ENCODE measurements at regions of chr10 and their contacts with region 1.

Region 1: DNA sequence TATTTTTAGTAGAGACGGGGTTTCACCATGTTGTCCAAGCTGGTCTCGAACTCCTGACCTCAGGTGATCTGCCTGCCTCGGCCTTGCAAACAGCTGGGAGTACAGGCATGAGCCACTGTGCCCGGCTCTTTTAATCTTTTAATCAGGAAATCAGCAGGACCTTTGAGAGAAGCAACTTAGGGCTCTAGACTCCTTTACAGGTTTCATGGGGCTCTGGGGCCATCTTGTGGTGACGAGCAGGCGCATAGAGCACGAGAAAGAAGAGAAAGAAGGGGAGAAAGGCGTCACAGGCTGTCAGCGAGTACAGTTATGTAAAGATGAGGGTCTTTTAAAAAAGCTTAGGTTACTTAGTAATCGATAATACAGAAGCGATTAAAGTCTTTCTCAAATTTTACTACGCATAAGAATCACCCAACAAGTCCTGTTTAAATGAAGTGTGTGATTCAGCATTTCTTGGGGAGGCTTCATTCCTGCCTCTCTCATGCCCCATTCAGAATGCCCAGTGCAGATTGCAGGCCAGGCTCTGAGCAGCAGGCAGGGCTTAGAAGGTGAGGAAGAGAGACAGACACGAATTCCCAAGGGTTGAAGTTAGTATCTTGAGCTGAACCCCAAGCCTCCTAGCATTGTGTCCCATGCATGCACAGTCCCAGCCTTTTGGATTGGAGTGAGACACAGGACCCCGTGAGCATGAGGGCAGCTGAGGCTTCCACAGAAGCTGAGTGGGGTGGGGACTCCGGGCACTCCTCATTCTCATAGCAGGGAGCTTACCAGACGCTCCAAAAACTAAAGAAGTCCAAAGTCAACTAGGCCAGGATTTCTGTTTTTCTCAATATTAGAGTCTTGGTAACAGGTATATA is 23.6 kb upstream of the PFKP start:
- DNase-seq: peak; percentile 80
- ATAC-seq: peak; percentile 59
- H3K4me3 ChIP-seq: no peak overlapping the region
- H3K27ac ChIP-seq: peak overlapping the region; percentile 78
- H3K4me1 ChIP-seq: peaks cover 30% of the 10 kb centered on the region
- H3K27me3 ChIP-seq: no peaks in the 10 kb centered on the region
- CTCF ChIP-seq: peak; percentile 96
- POLR2A ChIP-seq: peak; percentile 36; the same call in 1 of the 2 replicates
- RAD21 ChIP-seq: peak; percentile 96

Region 2: GRCh38 chr10:1109795-1110673 is 1933.7 kb before region 1 on chr10:
- CTCF ChIA-PET with region 1: no interaction called
- POLR2A ChIA-PET with region 1: no interaction called
- dilution Hi-C with region 1: no loop called
- in situ Hi-C with region 1: loop called (anchors 10 kb)
- intact Hi-C with region 1: loop called (anchors 2 kb)
- DNase-seq: peak; percentile 87
- ATAC-seq: peak; percentile 90
- H3K4me3 ChIP-seq: no peak overlapping the region
- H3K27ac ChIP-seq: peak overlapping the region; percentile 53
- H3K4me1 ChIP-seq: peaks cover 9% of the 10 kb centered on the region
- H3K27me3 ChIP-seq: no peaks in the 10 kb centered on the region
- CTCF ChIP-seq: peak; percentile 61
- POLR2A ChIP-seq: no peak
- RAD21 ChIP-seq: peak; percentile 59

Region 3: DNA sequence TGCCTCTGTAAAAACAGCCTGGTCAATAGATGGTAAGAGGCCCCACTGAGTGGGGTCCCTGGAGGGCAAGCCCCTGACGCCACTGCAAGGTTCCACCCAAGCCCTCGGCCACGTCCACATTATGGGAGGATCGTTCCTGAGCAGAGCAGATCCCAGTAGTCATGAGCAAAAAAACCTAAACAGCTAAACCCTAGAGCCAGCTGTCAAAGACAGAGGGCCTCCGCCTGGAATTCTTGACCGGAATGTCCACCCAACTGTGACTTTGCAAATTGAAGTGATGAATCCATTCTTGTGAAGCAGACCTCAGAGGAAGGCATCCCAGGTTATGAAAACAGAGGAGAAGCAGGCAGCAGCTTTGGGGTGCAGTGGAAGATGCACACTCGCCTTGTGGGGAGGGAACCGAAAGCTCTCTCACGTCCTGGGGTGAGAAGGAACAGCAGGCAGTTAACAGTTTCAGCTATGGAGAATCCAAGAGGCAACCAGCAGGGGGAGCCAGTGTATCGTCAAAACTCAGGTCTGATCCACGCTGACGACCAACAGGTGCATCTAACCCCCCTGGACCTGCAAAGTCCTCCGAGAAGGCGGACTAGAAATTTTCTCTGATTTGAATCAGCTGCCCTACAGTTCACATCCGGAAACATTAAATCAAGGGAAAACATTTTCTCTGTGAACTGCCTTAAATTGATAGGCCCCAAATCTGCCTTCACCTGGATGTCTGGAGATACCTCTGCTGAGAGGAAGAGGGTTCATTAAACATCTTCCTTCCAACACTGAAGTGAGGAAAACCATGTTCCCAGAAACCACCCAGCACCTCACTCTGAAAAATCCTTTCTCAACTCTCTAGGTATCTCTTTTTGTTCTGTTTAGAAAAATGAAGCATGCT is 115.5 kb before region 1 on chr10:
- CTCF ChIA-PET with region 1: interaction called, 38 read pairs
- POLR2A ChIA-PET with region 1: no interaction called
- dilution Hi-C with region 1: loop called (anchors 25 kb)
- in situ Hi-C with region 1: loop called (anchors 5 kb)
- intact Hi-C with region 1: loop called (anchors 1 kb)
- DNase-seq: peak; percentile 64
- ATAC-seq: peak; percentile 90
- H3K4me3 ChIP-seq: no peak overlapping the region
- H3K27ac ChIP-seq: no peak overlapping the region
- H3K4me1 ChIP-seq: 0 out of 2 replicates have a peak, but pooled peaks cover 1% of the 10 kb centered on the region
- H3K27me3 ChIP-seq: peaks cover 2% of the 10 kb centered on the region; the same call in 1 of the 2 replicates
- CTCF ChIP-seq: peak; percentile 83
- POLR2A ChIP-seq: no peak
- RAD21 ChIP-seq: peak; percentile 86

Region 4: GRCh38 chr10:2938869-2939268 is 104.9 kb before region 1 on chr10:
- CTCF ChIA-PET with region 1: interaction called, 24 read pairs
- POLR2A ChIA-PET with region 1: no interaction called
- dilution Hi-C with region 1: loop called (anchors 25 kb)
- in situ Hi-C with region 1: loop called (anchors 5 kb)
- intact Hi-C with region 1: no loop called
- DNase-seq: peak; percentile 21
- ATAC-seq: peak; percentile 29; the same call in 1 of the 2 replicates
- H3K4me3 ChIP-seq: no peak overlapping the region
- H3K27ac ChIP-seq: no peak overlapping the region
- H3K4me1 ChIP-seq: 0 out of 2 replicates have a peak, but pooled peaks cover 2% of the 10 kb centered on the region
- H3K27me3 ChIP-seq: peaks cover 15% of the 10 kb centered on the region
- CTCF ChIP-seq: peak; percentile 35
- POLR2A ChIP-seq: no peak
- RAD21 ChIP-seq: peak; percentile 41

Region 5: DNA sequence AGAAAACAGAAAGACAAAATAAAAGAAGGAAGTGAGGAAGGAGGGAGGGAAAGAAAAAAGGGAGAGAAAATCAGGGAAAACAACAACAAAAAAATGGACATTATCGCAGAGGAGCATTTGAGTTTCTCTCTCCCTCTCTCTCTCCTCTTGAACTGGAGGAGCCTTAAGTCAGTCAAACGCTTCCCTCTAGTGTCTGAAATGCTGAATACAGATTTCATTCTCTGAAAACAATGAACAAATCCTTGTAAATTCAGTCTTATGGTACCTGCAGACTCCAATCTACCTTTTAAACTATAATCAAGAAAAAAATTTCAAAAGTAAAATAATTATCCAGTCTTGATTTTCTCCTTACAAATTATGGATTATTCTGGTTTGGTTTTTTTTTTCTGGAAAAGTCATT is 65.6 kb before region 1 on chr10:
- CTCF ChIA-PET with region 1: interaction called, 15 read pairs
- POLR2A ChIA-PET with region 1: no interaction called
- dilution Hi-C with region 1: no loop called
- in situ Hi-C with region 1: no loop called
- intact Hi-C with region 1: loop called (anchors 1 kb)
- DNase-seq: peak; percentile 79
- ATAC-seq: peak; percentile 62
- H3K4me3 ChIP-seq: no peak overlapping the region
- H3K27ac ChIP-seq: no peak overlapping the region
- H3K4me1 ChIP-seq: peaks cover 8% of the 10 kb centered on the region
- H3K27me3 ChIP-seq: no peaks in the 10 kb centered on the region
- CTCF ChIP-seq: peak; percentile 82
- POLR2A ChIP-seq: no peak
- RAD21 ChIP-seq: peak; percentile 83

Region 6: DNA sequence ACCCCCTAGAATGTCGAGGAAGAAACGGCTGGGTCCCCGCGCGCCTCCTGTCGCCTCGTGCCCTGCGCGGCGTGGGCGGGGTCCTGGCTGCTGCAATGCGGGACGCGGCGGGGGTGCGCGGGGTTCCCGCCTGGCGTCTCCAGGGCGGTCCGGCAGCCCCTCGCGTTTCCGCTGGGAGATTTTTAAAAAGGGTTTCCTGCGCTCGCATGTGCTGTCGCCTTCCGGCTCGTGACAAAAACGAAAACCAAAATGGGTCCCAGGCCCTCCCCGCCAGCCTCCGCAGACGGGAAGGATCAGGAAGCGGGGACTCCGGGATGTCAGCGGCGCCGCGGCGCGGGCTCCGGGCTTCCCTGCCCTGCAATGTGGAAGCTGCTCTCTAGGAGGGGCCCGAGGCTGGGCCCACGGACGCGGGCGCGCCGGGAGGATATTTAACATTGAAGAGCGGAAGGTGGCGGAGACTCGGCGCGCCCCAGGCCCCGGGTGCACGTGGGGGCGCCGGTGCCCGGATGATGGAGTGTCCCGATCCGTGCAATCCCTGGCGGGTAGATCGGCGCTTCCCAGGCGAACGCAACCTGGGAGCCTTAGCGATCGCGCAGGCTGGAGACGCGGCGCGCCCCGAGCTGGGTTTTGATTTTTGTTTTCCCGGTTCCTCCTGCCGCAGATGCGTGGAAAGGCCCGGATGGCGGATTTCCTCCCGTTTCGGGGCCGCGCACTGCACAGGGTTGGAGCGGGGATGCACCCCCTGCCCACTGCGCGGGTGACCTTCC is 24.6 kb after region 1 on chr10:
- CTCF ChIA-PET with region 1: interaction called, 4 read pairs
- POLR2A ChIA-PET with region 1: interaction called, 14 read pairs
- dilution Hi-C with region 1: no loop called
- in situ Hi-C with region 1: no loop called
- intact Hi-C with region 1: loop called (anchors 2 kb)
- DNase-seq: peak; percentile 54
- ATAC-seq: peak; percentile 24
- H3K4me3 ChIP-seq: peak overlapping the region; percentile 100
- H3K27ac ChIP-seq: peak overlapping the region; percentile 94
- H3K4me1 ChIP-seq: peaks cover 21% of the 10 kb centered on the region
- H3K27me3 ChIP-seq: no peaks in the 10 kb centered on the region
- CTCF ChIP-seq: peak; percentile 36
- POLR2A ChIP-seq: no peak
- RAD21 ChIP-seq: peak; percentile 33